IMR-90 (cell line): ENCODE measurements at regions of chr2 and their contacts with region 1.

Region 1: GRCh38 chr2:111659416-111660281 is 224.3 kb downstream of the ANAPC1 start:
- DNase-seq: peak; percentile 85
- ATAC-seq: peak; percentile 72
- H3K4me3 ChIP-seq: no peak overlapping the region
- H3K27ac ChIP-seq: peak overlapping the region; percentile 53; the same call in 1 of the 2 replicates
- H3K4me1 ChIP-seq: peaks cover 25% of the 10 kb centered on the region
- H3K27me3 ChIP-seq: peaks cover 3% of the 10 kb centered on the region; the same call in 1 of the 2 replicates
- CTCF ChIP-seq: no peak
- POLR2A ChIP-seq: no peak
- RAD21 ChIP-seq: no peak

Region 2: DNA sequence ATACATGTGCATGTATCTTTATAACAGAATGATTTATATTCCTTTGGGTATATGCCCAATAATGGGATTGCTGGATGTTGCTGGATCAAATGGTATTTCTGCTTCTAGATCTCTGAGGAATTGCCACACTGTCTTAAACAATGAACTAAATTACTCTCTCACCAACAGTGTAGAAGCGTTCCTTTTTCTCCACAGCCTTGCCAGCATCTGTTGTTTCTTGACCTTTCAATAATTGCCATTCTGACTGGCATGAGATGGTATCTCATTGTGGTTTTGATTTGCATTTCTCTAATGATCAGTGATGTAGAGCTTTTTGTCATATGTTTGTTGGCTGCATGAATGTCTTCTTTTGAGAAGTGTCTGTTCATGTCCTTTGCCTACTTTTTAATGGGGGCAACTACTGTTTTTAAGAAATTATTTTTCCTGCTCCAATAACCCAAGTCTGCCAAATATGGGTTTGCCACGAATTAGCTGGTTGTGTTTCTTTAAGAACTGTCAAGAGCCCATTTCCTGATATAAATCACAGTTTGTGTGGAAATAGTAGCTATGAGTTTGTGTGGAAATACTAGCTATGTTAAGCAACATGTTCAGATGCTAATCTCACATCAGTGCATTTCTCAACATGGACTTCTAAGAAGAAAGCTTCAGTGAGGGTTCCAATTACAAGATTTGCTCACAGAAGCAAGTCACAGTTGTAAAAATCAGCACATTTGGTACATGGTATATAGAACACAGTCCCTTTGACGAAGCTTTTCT is 35.1 kb before region 1 on chr2:
- CTCF ChIA-PET with region 1: no interaction called
- POLR2A ChIA-PET with region 1: no interaction called
- dilution Hi-C with region 1: no loop called
- in situ Hi-C with region 1: no loop called
- intact Hi-C with region 1: loop called (anchors 5 kb)
- DNase-seq: peak; percentile 86
- ATAC-seq: peak; percentile 69
- H3K4me3 ChIP-seq: no peak overlapping the region
- H3K27ac ChIP-seq: no peak overlapping the region; the same call in 1 of the 2 replicates
- H3K4me1 ChIP-seq: peaks cover 4% of the 10 kb centered on the region; the same call in 1 of the 2 replicates
- H3K27me3 ChIP-seq: no peaks in the 10 kb centered on the region; the same call in none of the 2 replicates
- CTCF ChIP-seq: no peak
- POLR2A ChIP-seq: no peak
- RAD21 ChIP-seq: no peak

Region 3: GRCh38 chr2:111642586-111643327 is 16.9 kb before region 1 on chr2:
- CTCF ChIA-PET with region 1: no interaction called
- POLR2A ChIA-PET with region 1: no interaction called
- dilution Hi-C with region 1: no loop called
- in situ Hi-C with region 1: no loop called
- intact Hi-C with region 1: no loop called
- DNase-seq: no peak
- ATAC-seq: no peak
- H3K4me3 ChIP-seq: no peak overlapping the region
- H3K27ac ChIP-seq: no peak overlapping the region
- H3K4me1 ChIP-seq: no peaks in the 10 kb centered on the region
- H3K27me3 ChIP-seq: peaks cover 23% of the 10 kb centered on the region
- CTCF ChIP-seq: no peak
- POLR2A ChIP-seq: no peak
- RAD21 ChIP-seq: no peak